Ascending aorta (tissue), 2 donors: ENCODE measurements at regions of chr17 and their contacts with region 1.

Region 1: GRCh38 chr17:50626037-50626574 is 8.6 kb upstream of the ABCC3 start:
- DNase-seq: peak in 1 of 2 donors; percentile 87
- H3K4me3 ChIP-seq: no peak overlapping the region
- H3K27ac ChIP-seq: no peak overlapping the region
- H3K4me1 ChIP-seq: peaks cover 0 to 1% of the 10 kb centered on the region in 2 donors
- H3K27me3 ChIP-seq: no peaks in the 10 kb centered on the region
- CTCF ChIP-seq: peak; percentile 66 to 85 (median 74)

Region 2: DNA sequence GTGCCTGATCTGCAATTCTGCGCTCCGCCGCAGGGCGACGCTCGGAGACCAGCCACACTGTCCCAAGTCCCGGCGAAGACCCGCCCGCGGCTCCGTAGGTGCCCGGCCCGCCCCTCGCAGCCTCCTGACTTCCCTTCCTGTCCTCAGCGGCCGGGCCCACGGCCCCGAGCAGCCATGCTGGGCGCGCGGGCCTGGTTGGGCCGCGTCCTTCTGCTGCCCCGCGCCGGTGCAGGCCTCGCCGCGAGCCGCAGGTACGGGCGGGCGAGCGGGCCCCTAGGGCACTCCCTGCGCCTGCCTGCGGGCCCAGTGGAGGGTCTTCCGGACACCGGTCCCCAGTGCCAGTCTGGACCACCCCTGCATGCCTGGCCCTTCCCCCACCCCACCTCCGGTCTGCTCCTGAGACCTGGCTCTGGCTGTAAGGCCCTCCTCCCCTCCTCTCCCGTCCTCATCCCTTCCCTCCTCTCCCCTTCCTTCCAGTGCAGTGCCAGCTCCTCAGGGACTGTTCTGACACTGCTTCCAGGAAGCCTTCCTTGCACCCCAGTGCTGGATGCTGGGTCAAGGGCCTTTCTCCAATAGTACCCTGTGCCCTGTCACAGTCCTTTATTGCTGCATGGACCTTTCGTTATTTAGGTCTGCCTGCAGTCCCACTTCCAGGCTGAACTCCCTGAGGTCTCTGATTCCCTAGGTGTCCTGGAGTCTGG is 78.9 kb before region 1 on chr17 and contains the start of gene SPATA20:
- intact Hi-C with region 1: loop called (anchors 1 kb)
- DNase-seq: peak; percentile 72 to 97
- H3K4me3 ChIP-seq: peak within 1 kb of the TSS; percentile 69 to 76
- H3K27ac ChIP-seq: peak within 1 kb of the TSS; percentile 65 to 80
- H3K4me1 ChIP-seq: peaks cover 3 to 16% of the 10 kb centered on the region in 2 donors
- H3K27me3 ChIP-seq: no peaks in the 10 kb centered on the region
- CTCF ChIP-seq: peak; percentile 99
- total RNA-seq, gene SPATA20: 463 TPM

Region 3: DNA sequence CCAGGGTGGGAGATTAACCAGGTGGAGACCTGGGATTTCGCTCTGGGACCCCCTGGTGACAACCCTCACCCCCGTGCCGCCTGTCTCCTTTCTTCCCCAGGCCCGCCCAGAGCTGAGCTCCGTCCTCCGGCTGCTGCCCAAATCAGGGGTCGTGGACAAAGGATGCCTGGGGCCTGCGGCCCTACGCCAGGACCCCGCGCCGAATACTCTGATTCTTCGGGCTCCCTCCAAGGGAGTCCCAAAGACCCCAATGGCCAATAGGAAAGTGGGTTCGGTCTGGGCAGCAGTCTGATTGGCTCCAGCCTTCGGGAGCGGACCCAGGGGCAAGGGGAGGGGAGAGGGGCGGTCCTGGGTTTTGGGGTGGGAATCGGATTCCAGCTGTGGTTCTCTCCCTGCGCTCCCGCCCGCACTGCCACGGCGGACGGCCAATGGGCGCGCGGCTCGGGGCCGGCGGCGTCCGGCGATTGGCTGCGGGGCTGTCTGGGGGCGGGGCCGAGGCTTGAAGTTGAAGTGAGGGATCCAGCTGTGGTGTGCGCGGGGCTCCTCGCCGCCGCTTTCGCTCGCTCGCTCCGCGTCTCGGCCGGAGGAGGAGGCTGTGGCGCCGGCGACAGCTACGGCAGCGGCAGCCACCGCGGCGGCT is 65.8 kb before region 1 on chr17 and contains the start of gene CACNA1G:
- intact Hi-C with region 1: loop called (anchors 5 kb)
- DNase-seq: peak; percentile 47 to 95
- H3K4me3 ChIP-seq: peak within 1 kb of the TSS; percentile 57 to 74
- H3K27ac ChIP-seq: no peak within 1 kb of the TSS
- H3K4me1 ChIP-seq: peaks cover 22 to 44% of the 10 kb centered on the region in 2 donors
- H3K27me3 ChIP-seq: peaks cover 10% of the 10 kb centered on the region
- CTCF ChIP-seq: no peak
- total RNA-seq, gene CACNA1G: 1.2 TPM

Region 4: GRCh38 chr17:50575581-50576210 is 50.4 kb before region 1 on chr17:
- intact Hi-C with region 1: no loop called
- DNase-seq: no peak
- H3K4me3 ChIP-seq: no peak overlapping the region
- H3K27ac ChIP-seq: no peak overlapping the region
- H3K4me1 ChIP-seq: no peaks in the 10 kb centered on the region
- H3K27me3 ChIP-seq: peaks cover 4% of the 10 kb centered on the region
- CTCF ChIP-seq: no peak

Region 5: DNA sequence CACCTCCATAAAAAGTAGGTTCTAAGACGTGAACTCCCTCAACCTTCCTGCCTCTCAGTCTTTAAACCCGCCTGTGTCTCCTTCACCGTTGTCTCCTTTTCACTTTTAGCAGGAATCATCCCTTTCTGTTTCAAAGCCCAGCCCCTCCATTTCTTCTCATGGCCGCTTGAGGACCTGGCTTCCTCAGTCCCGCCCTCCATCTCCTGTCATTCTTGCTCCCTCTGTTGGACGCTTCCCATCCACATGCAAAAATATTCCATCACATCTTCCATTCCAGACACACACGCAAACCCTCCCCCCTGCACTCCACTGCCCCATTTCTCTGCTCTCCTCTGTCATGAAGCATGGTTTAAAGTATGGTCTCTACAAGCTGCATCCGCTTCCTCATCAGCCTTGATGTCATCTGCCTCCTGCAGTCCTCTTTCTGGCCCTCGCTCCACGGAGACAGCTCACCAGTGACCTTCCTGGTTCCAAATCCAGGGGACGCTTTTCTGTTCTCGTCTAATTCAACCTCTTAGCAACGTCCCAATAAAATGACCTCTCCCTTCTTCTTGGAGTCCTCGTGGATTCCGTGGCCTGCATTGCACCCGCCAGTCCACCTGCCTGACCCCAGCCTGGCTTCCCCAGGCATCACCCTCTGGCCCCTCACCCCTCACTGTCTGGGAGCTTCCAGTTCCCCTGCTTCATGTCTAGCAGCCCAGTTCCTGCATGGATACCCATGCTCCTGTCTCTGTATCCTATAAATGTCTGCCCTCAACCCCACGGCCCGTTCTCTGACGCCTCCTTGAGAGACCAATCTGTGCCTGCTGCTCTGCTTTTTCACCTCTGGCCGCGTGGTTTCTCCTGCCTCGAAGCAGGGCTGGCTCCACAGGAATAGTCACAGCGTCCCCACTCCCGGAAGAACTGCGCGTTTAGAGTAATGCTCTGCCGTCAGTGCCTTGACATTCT is 55.4 kb after region 1 on chr17:
- intact Hi-C with region 1: loop called (anchors 2 kb)
- DNase-seq: no peak
- H3K4me3 ChIP-seq: no peak overlapping the region
- H3K27ac ChIP-seq: no peak overlapping the region
- H3K4me1 ChIP-seq: peaks cover 5 to 7% of the 10 kb centered on the region in 2 donors
- H3K27me3 ChIP-seq: no peaks in the 10 kb centered on the region
- CTCF ChIP-seq: peak; percentile 34 to 55 (median 54)

Region 6: DNA sequence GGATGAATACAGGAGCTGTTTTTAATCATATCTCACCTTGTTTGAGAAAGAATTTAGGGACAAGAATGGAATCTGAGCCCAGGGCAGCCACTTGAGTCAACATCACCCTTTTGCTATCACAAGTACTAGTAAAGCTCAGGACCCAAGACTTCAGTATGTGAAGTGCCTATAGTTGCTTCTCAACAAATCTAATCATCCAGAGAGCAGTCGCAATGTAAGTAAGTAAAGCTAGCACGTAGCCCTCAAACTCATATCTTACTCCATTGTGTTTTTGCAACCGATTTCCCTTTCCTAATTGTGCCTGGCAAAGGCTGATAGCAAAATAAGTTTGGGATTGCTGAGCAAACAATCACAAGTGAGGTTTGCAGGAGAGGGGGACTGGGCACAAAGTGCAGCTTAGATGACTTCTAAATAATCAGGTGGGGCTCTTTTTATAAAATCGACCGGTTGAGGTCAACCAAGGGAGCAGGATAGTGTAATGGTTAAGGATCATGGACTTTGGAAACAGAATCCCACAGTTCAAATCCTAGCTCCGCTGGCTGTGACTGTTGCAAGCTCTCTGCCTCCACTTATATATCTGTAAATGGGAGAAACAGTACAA is 227.0 kb after region 1 on chr17:
- intact Hi-C with region 1: no loop called
- DNase-seq: no peak
- H3K4me3 ChIP-seq: peak overlapping the region in 1 of 2 donors; percentile 60
- H3K27ac ChIP-seq: peak overlapping the region; percentile 79 to 83
- H3K4me1 ChIP-seq: no peaks in the 10 kb centered on the region
- H3K27me3 ChIP-seq: no peaks in the 10 kb centered on the region
- CTCF ChIP-seq: no peak